Heart left ventricle (tissue), 16 donors: ENCODE measurements at regions of chr1 and their contacts with region 1.

Region 1: DNA sequence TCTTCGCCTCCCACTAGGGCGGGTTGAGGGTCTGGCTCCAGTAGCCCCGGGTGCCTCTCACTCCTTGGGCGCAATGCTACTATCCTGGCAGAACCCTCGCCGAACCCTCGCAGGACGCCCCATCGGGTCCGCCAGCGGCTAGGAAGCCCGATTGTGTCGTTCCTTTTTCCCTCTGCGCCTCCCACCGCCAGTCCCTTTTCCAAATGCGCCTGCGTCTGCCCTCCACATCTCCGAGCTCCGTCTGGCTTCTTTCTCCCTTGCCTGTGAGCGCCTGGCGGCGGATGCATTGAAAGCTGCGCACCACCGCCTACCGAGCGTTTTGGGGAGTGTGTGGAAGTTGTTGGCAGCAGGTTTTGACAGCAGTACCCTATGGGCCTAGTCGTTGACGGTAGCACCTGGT is 1.0 kb upstream of the DIRAS3 start:
- DNase-seq: peak; percentile 40 to 74 (median 72)
- ATAC-seq: peak; percentile 62 to 90 (median 84)
- H3K4me3 ChIP-seq: peak overlapping the region in 11 of 12 donors; percentile 7 to 58 (median 46)
- H3K27ac ChIP-seq: no peak overlapping the region
- H3K4me1 ChIP-seq: no peaks in the 10 kb centered on the region
- H3K27me3 ChIP-seq: peaks cover 0 to 12% (median 0%) of the 10 kb centered on the region in 9 donors
- CTCF ChIP-seq: peak in 8 of 12 donors; percentile 6 to 48 (median 24)
- POLR2A ChIP-seq: no peak

Region 2: GRCh38 chr1:67889953-67890567 is 161.4 kb before region 1 on chr1:
- intact Hi-C with region 1: no loop called
- DNase-seq: no peak
- ATAC-seq: peak in 3 of 4 donors; percentile 37 to 89 (median 60)
- H3K4me3 ChIP-seq: no peak overlapping the region
- H3K27ac ChIP-seq: no peak overlapping the region
- H3K4me1 ChIP-seq: peaks cover 0 to 12% (median 0%) of the 10 kb centered on the region in 12 donors
- H3K27me3 ChIP-seq: no peaks in the 10 kb centered on the region
- CTCF ChIP-seq: no peak
- POLR2A ChIP-seq: no peak

Region 3: DNA sequence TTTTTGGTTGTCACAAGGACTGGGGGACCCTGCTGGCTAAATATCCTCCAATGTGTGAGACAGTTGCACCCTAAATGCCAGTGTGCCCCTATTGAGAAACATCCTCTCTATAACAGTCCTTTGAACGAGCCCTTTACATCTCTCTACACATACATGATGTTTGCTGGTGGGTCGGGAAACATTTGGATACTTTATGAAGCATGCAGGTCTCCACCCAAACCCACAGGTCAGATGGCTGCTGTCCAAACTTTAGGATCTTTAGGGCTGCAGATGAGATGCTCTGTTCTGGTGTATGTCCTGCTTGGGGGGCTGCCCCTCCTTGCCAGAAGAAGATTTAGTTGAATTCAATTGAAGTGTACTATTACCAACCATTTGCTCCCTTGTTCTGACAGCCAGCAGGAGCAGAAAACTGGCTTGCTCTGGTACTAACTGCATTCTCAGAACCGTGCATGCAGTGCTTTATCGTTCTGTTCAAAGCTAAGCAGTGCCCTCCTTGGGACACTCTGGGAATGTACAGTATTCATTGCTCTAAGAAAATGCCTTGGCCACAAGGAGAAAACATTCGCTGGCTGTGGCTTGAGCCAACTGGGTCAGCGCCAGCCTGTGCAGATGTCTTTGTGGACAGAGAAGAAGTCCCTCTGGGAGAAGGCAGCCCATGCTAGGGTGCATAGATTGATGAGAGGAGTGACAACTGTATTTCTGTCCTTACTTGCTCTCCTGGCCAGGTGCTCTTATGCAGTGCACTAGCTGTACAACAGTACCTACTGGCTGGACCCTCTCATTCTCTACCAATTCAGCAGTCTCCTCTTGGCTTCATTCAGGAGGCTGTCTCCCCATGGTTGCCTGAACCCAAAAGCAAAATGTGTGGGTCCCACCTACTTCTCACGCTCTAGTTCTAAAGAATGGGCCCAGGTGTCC is 60.3 kb after region 1 on chr1:
- intact Hi-C with region 1: loop called in 1 of 10 experiments (anchors 5 kb)
- DNase-seq: peak; percentile 57 to 80 (median 70)
- ATAC-seq: peak; percentile 82 to 91 (median 88)
- H3K4me3 ChIP-seq: no peak overlapping the region
- H3K27ac ChIP-seq: no peak overlapping the region
- H3K4me1 ChIP-seq: peaks cover 0 to 28% (median 16%) of the 10 kb centered on the region in 12 donors
- H3K27me3 ChIP-seq: no peaks in the 10 kb centered on the region
- CTCF ChIP-seq: peak; percentile 25 to 73 (median 48)
- POLR2A ChIP-seq: no peak

Region 4: GRCh38 chr1:68538941-68539340 is 487.5 kb after region 1 on chr1:
- intact Hi-C with region 1: no loop called
- DNase-seq: no peak
- ATAC-seq: no peak
- H3K4me3 ChIP-seq: no peak overlapping the region
- H3K27ac ChIP-seq: no peak overlapping the region
- H3K4me1 ChIP-seq: no peaks in the 10 kb centered on the region
- H3K27me3 ChIP-seq: no peaks in the 10 kb centered on the region
- CTCF ChIP-seq: no peak
- POLR2A ChIP-seq: no peak